CD4-positive, alpha-beta T cell (primary cell): ENCODE measurements at regions of chr10 and their contacts with region 1.

Region 1: GRCh38 chr10:24724381-24725228 is 918 bp upstream of the ARHGAP21 start:
- DNase-seq: peak; percentile 87 to 98 (median 94)
- ATAC-seq: peak; percentile 89
- H3K4me3 ChIP-seq: peak overlapping the region; percentile 92
- H3K4me3 Mint-ChIP-seq: peak overlapping the region; percentile 97
- H3K27ac ChIP-seq: peak overlapping the region; percentile 47 to 66
- H3K27ac Mint-ChIP-seq: peak overlapping the region; percentile 85
- H3K4me1 ChIP-seq: peaks cover 22% of the 10 kb centered on the region
- H3K4me1 Mint-ChIP-seq: peaks cover 22% of the 10 kb centered on the region
- H3K27me3 ChIP-seq: no peaks in the 10 kb centered on the region
- H3K27me3 Mint-ChIP-seq: no peaks in the 10 kb centered on the region
- CTCF ChIP-seq: peak; percentile 6

Region 2: DNA sequence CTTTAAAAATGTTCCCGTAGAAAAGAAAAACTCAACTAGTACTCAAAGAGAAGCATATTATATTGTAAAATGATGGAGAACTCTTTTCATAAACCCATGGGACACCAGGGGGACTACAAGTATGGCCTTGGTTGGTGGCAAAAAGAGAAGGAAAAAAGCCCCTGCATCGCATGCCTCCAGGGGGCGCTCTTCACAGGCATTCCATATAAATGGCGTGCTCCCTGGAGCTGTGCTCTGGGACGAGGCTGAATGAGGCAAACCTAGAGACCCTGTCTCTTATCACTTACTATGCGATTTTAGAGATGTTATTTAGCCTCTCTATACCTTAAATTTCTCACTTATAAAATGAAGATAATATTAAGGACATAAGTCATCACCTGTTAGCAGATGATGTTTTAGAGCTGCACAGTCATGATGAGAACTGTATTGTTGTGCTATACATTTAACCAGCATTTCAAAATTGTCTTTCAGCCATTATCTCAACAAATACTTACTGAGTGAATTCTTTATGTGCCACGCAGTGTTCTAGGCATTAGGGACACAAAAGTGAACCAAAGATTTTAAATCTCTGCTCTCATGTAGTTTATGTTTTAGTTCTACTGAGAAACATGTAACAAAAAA is 106.7 kb before region 1 on chr10:
- CTCF ChIA-PET with region 1: interaction called, 4 read pairs
- POLR2A ChIA-PET with region 1: interaction called, 55 read pairs
- intact Hi-C with region 1: loop called (anchors 1 to 5 kb)
- DNase-seq: peak; percentile 14 to 79 (median 35)
- ATAC-seq: no peak
- H3K4me3 ChIP-seq: no peak overlapping the region
- H3K4me3 Mint-ChIP-seq: peak overlapping the region; percentile 64
- H3K27ac ChIP-seq: no peak overlapping the region
- H3K27ac Mint-ChIP-seq: peak overlapping the region; percentile 89
- H3K4me1 ChIP-seq: no peaks in the 10 kb centered on the region
- H3K4me1 Mint-ChIP-seq: peaks cover 50% of the 10 kb centered on the region
- H3K27me3 ChIP-seq: no peaks in the 10 kb centered on the region
- H3K27me3 Mint-ChIP-seq: no peaks in the 10 kb centered on the region
- CTCF ChIP-seq: peak; percentile 86

Region 3: GRCh38 chr10:24642622-24643417 is 81.8 kb before region 1 on chr10:
- CTCF ChIA-PET with region 1: no interaction called
- POLR2A ChIA-PET with region 1: no interaction called
- intact Hi-C with region 1: loop called in 1 of 2 experiments (anchors 5 kb)
- DNase-seq: peak in 4 of 14 experiments; percentile 27 to 74 (median 70)
- ATAC-seq: peak; percentile 92
- H3K4me3 ChIP-seq: no peak overlapping the region
- H3K4me3 Mint-ChIP-seq: no peak overlapping the region
- H3K27ac ChIP-seq: no peak overlapping the region
- H3K27ac Mint-ChIP-seq: no peak overlapping the region
- H3K4me1 ChIP-seq: no peaks in the 10 kb centered on the region
- H3K4me1 Mint-ChIP-seq: no peaks in the 10 kb centered on the region
- H3K27me3 ChIP-seq: no peaks in the 10 kb centered on the region
- H3K27me3 Mint-ChIP-seq: no peaks in the 10 kb centered on the region
- CTCF ChIP-seq: peak; percentile 93

Region 4: GRCh38 chr10:24882047-24882698 is 157.6 kb after region 1 on chr10:
- CTCF ChIA-PET with region 1: no interaction called
- POLR2A ChIA-PET with region 1: interaction called, 10 read pairs
- intact Hi-C with region 1: loop called (anchors 5 to 10 kb)
- DNase-seq: peak; percentile 17 to 80 (median 44)
- ATAC-seq: peak; percentile 87
- H3K4me3 ChIP-seq: peak overlapping the region; percentile 42
- H3K4me3 Mint-ChIP-seq: peak overlapping the region; percentile 77
- H3K27ac ChIP-seq: peak overlapping the region in 1 of 2 donors; percentile 63
- H3K27ac Mint-ChIP-seq: peak overlapping the region; percentile 91
- H3K4me1 ChIP-seq: peaks cover 47% of the 10 kb centered on the region
- H3K4me1 Mint-ChIP-seq: peaks cover 52% of the 10 kb centered on the region
- H3K27me3 ChIP-seq: no peaks in the 10 kb centered on the region
- H3K27me3 Mint-ChIP-seq: no peaks in the 10 kb centered on the region
- CTCF ChIP-seq: no peak

Region 5: DNA sequence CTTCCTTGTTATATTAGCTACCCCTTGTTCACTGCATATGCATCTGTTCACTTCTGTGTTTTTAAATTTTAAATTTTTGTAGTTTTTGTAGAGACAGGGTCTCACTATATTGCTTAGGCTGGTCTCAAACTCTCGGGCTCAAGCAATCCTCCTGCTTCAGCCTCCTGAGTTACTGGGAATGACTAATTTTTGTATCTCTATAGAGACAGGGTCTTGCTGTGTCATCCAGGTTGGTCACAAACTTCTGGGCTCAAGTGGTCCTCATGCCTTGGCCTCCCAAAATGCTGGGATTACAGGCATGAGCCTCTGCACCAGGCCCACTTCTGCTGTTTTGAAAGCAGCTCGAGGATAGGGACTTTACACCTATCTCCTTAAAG is 163.2 kb after region 1 on chr10:
- CTCF ChIA-PET with region 1: interaction called, 3 read pairs
- POLR2A ChIA-PET with region 1: interaction called, 10 read pairs
- intact Hi-C with region 1: loop called (anchors 5 to 10 kb)
- DNase-seq: no peak
- ATAC-seq: no peak
- H3K4me3 ChIP-seq: peak overlapping the region; percentile 21
- H3K4me3 Mint-ChIP-seq: peak overlapping the region; percentile 64
- H3K27ac ChIP-seq: peak overlapping the region; percentile 37 to 61
- H3K27ac Mint-ChIP-seq: peak overlapping the region; percentile 76
- H3K4me1 ChIP-seq: peaks cover 45% of the 10 kb centered on the region
- H3K4me1 Mint-ChIP-seq: peaks cover 54% of the 10 kb centered on the region
- H3K27me3 ChIP-seq: no peaks in the 10 kb centered on the region
- H3K27me3 Mint-ChIP-seq: no peaks in the 10 kb centered on the region
- CTCF ChIP-seq: no peak

Region 6: GRCh38 chr10:24952707-24953645 is 228.4 kb after region 1 on chr10:
- CTCF ChIA-PET with region 1: no interaction called
- POLR2A ChIA-PET with region 1: interaction called, 5 read pairs
- intact Hi-C with region 1: loop called (anchors 5 kb)
- DNase-seq: peak; percentile 7 to 80 (median 54)
- ATAC-seq: peak; percentile 77
- H3K4me3 ChIP-seq: peak overlapping the region; percentile 72
- H3K4me3 Mint-ChIP-seq: peak overlapping the region; percentile 87
- H3K27ac ChIP-seq: no peak overlapping the region
- H3K27ac Mint-ChIP-seq: peak overlapping the region; percentile 62
- H3K4me1 ChIP-seq: peaks cover 17% of the 10 kb centered on the region
- H3K4me1 Mint-ChIP-seq: peaks cover 18% of the 10 kb centered on the region
- H3K27me3 ChIP-seq: no peaks in the 10 kb centered on the region
- H3K27me3 Mint-ChIP-seq: no peaks in the 10 kb centered on the region
- CTCF ChIP-seq: peak; percentile 24

Region 7: GRCh38 chr10:25016376-25017154 is 292.0 kb after region 1 on chr10 and contains the start of gene THNSL1:
- CTCF ChIA-PET with region 1: no interaction called
- POLR2A ChIA-PET with region 1: interaction called, 10 read pairs
- intact Hi-C with region 1: loop called (anchors 2 kb)
- DNase-seq: peak; percentile 95 to 99 (median 97)
- ATAC-seq: peak; percentile 93
- H3K4me3 ChIP-seq: peak within 1 kb of the TSS; percentile 82
- H3K4me3 Mint-ChIP-seq: peak within 1 kb of the TSS; percentile 94
- H3K27ac ChIP-seq: peak within 1 kb of the TSS; percentile 86 to 89
- H3K27ac Mint-ChIP-seq: peak within 1 kb of the TSS; percentile 95
- H3K4me1 ChIP-seq: peaks cover 19% of the 10 kb centered on the region
- H3K4me1 Mint-ChIP-seq: peaks cover 29% of the 10 kb centered on the region
- H3K27me3 ChIP-seq: no peaks in the 10 kb centered on the region
- H3K27me3 Mint-ChIP-seq: no peaks in the 10 kb centered on the region
- CTCF ChIP-seq: no peak
- total RNA-seq, gene THNSL1: 0.31 to 0.52 TPM